ENCODE measurements at regions of chr1 and their contacts with region 1.

Region 1: GRCh38 chr1:46340404-46341221 is at the start of gene NSUN4:
- DNase-seq: peak; percentile 92
- ATAC-seq: peak; percentile 91
- H3K4me3 Mint-ChIP-seq: peak within 1 kb of the TSS; percentile 100
- H3K27ac Mint-ChIP-seq: peak within 1 kb of the TSS; percentile 99
- H3K4me1 Mint-ChIP-seq: peaks cover 36% of the 10 kb centered on the region
- H3K27me3 Mint-ChIP-seq: no peaks in the 10 kb centered on the region
- total RNA-seq, gene NSUN4: 20.6 to 26.7 TPM

Region 2: GRCh38 chr1:46247436-46248121 is 93.0 kb before region 1 on chr1 and contains the start of gene RAD54L:
- CTCF ChIA-PET with region 1: interaction called, 53 read pairs
- DNase-seq: peak; percentile 99
- ATAC-seq: peak; percentile 95
- H3K4me3 Mint-ChIP-seq: peak within 1 kb of the TSS; percentile 99
- H3K27ac Mint-ChIP-seq: peak within 1 kb of the TSS; percentile 98
- H3K4me1 Mint-ChIP-seq: peaks cover 44% of the 10 kb centered on the region
- H3K27me3 Mint-ChIP-seq: no peaks in the 10 kb centered on the region
- total RNA-seq, gene RAD54L: 57.2 to 85.3 TPM

Region 3: DNA sequence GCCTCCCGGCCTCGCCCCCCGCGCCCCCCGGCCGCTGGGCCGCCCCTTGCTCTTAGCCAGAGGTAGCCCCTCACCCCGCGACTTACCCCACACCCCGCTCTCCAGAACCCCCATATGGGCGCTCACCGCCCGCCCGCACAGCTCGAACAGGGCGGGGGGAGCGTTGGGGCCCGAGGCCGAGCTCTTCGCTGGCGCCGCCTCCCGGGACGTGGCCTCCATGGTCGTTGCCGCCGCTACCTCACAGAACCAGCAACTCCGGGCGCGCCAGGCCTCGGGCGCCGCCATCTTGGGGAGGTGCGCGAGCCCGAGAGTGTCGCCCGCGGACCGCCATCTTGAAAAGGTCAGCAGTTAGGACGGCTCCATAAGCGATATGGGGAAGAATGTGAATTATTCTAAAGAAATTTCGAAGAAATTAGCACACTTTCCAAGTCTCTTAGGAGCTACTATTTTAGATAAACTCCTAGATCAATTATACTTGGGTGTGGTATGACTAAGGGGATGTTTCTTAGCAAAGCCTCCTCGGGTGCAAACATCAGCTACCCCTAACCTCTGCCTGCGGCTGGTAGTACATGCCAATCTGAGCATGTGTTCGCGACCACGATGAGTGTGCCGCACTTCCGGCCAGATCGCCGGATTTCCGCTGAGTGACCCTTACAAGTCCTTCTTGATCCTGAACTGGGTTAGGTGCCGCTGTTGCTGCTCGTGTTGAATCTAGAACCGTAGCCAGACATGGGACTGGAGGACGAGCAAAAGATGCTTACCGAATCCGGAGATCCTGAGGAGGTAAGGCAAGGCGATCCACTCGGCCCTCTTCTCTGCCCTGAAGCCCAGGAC is 37.4 kb before region 1 on chr1 and contains the starts of genes LRRC41 and UQCRH:
- CTCF ChIA-PET with region 1: interaction called, 26 read pairs
- DNase-seq: peak; percentile 95
- ATAC-seq: peak; percentile 82
- H3K4me3 Mint-ChIP-seq: peak within 1 kb of the TSS; percentile 100
- H3K27ac Mint-ChIP-seq: peak within 1 kb of the TSS; percentile 98
- H3K4me1 Mint-ChIP-seq: peaks cover 51% of the 10 kb centered on the region
- H3K27me3 Mint-ChIP-seq: no peaks in the 10 kb centered on the region
- total RNA-seq, gene LRRC41: 33.4 to 44.7 TPM
- total RNA-seq, gene UQCRH: 279 to 302 TPM